PC-3 (cell line): ENCODE measurements at regions of chr12 and their contacts with region 1.

Region 1: GRCh38 chr12:43282106-43282505 is 269.9 kb downstream of the ADAMTS20 start:
- DNase-seq: peak; percentile 58
- ATAC-seq: no peak
- H3K4me3 ChIP-seq: no peak overlapping the region
- H3K27ac ChIP-seq: no peak overlapping the region
- H3K4me1 ChIP-seq: peaks cover 45% of the 10 kb centered on the region
- H3K27me3 ChIP-seq: no peaks in the 10 kb centered on the region
- CTCF ChIP-seq: peak; percentile 79

Region 2: GRCh38 chr12:42129595-42130204 is 1152.4 kb before region 1 on chr12:
- CTCF ChIA-PET with region 1: no interaction called
- POLR2A ChIA-PET with region 1: no interaction called
- intact Hi-C with region 1: loop called (anchors 5 kb)
- DNase-seq: peak; percentile 80
- ATAC-seq: peak; percentile 62
- H3K4me3 ChIP-seq: no peak overlapping the region
- H3K27ac ChIP-seq: no peak overlapping the region
- H3K4me1 ChIP-seq: peaks cover 20% of the 10 kb centered on the region
- H3K27me3 ChIP-seq: no peaks in the 10 kb centered on the region
- CTCF ChIP-seq: peak; percentile 94

Region 3: DNA sequence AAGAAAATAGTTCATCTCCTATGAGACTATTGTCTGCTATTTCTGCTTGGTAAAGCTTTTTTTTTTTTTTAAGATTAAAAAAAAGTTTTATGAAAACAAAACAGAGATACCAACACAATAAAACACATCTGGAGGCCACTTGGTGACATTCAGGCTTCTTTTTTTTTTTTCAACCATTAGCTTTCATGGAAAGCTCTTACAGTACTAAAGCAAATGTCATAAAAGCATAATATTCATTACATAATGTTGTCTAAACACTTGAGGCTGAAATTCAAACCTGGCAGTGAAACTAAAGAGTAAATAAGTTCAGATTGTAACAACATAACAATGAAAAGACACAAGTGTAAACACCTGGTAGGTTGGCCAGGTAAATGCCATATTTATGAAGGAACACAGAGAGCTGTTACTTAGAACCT is 707.2 kb before region 1 on chr12:
- CTCF ChIA-PET with region 1: interaction called, 3 read pairs
- POLR2A ChIA-PET with region 1: no interaction called
- intact Hi-C with region 1: loop called (anchors 5 kb)
- DNase-seq: no peak
- ATAC-seq: peak; percentile 45
- H3K4me3 ChIP-seq: no peak overlapping the region
- H3K27ac ChIP-seq: no peak overlapping the region
- H3K4me1 ChIP-seq: peaks cover 1% of the 10 kb centered on the region
- H3K27me3 ChIP-seq: no peaks in the 10 kb centered on the region
- CTCF ChIP-seq: no peak

Region 4: GRCh38 chr12:42744539-42745156 is 537.5 kb before region 1 on chr12:
- CTCF ChIA-PET with region 1: no interaction called
- POLR2A ChIA-PET with region 1: no interaction called
- intact Hi-C with region 1: loop called (anchors 1 kb)
- DNase-seq: peak; percentile 90
- ATAC-seq: peak; percentile 34
- H3K4me3 ChIP-seq: no peak overlapping the region
- H3K27ac ChIP-seq: peak overlapping the region; percentile 33
- H3K4me1 ChIP-seq: peaks cover 44% of the 10 kb centered on the region
- H3K27me3 ChIP-seq: no peaks in the 10 kb centered on the region
- CTCF ChIP-seq: no peak

Region 5: DNA sequence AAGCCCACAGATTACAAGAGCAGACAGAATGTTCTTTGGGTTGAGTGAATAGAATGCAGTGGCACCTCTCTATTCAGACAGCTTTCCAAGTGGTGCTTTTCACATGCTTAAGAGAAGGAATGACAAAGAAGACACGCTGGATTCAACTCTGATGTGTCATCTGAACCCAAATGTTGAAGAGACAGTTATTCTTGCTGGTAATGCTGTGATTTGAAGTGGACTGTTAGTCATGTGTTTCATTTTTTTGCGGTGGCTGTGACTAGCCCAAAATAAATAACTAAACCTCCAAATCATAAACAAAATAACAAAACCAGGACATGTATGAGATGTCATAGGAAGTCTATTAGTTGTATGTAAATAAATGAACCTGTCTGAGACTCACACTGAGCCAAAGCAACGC is 300.7 kb before region 1 on chr12:
- CTCF ChIA-PET with region 1: no interaction called
- POLR2A ChIA-PET with region 1: no interaction called
- intact Hi-C with region 1: loop called (anchors 5 kb)
- DNase-seq: peak; percentile 80
- ATAC-seq: peak; percentile 93
- H3K4me3 ChIP-seq: no peak overlapping the region
- H3K27ac ChIP-seq: 0 out of 2 replicates have a peak overlapping the region, but pooled peaks have one; percentile 15
- H3K4me1 ChIP-seq: peaks cover 24% of the 10 kb centered on the region
- H3K27me3 ChIP-seq: no peaks in the 10 kb centered on the region
- CTCF ChIP-seq: no peak

Region 6: GRCh38 chr12:43198608-43199007 is 83.5 kb before region 1 on chr12:
- CTCF ChIA-PET with region 1: no interaction called
- POLR2A ChIA-PET with region 1: no interaction called
- intact Hi-C with region 1: loop called (anchors 10 kb)
- DNase-seq: no peak
- ATAC-seq: no peak
- H3K4me3 ChIP-seq: no peak overlapping the region
- H3K27ac ChIP-seq: no peak overlapping the region
- H3K4me1 ChIP-seq: no peaks in the 10 kb centered on the region
- H3K27me3 ChIP-seq: no peaks in the 10 kb centered on the region
- CTCF ChIP-seq: no peak

Region 7: GRCh38 chr12:43436597-43436996 is 154.5 kb after region 1 on chr12:
- CTCF ChIA-PET with region 1: no interaction called
- POLR2A ChIA-PET with region 1: no interaction called
- intact Hi-C with region 1: no loop called
- DNase-seq: no peak
- ATAC-seq: no peak
- H3K4me3 ChIP-seq: no peak overlapping the region
- H3K27ac ChIP-seq: no peak overlapping the region
- H3K4me1 ChIP-seq: no peaks in the 10 kb centered on the region
- H3K27me3 ChIP-seq: no peaks in the 10 kb centered on the region
- CTCF ChIP-seq: no peak